SK-N-SH (cell line): ENCODE measurements at regions of chr17 and their contacts with region 1.

Region 1: DNA sequence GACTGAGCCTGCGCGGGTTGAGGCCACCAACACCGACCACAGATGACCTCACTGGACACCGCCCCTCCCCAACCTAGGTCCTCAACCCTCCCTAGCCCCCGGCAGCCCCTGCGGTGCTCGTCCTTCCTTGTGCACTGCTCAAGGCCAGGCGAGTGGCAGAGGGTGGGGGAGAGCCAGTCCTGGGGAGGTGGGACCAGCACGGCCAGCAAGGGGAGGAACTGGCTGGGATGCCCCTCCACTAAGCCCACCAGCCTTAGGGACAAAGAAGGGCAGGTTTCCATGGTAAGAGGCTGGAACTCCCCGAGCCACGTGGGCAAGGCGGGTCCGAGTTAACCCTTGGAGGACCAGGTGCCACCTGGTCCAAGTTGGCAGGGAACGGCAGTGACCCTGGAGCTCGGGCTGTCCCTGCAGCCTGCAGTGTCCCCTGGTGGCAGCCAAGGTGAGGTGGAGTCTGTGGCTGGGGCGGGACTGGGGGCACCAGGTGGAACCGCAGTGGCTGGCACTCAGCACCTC is 9.2 kb downstream of the FSCN2 start:
- DNase-seq: peak; percentile 92
- H3K4me3 ChIP-seq: no peak overlapping the region
- H3K27ac ChIP-seq: no peak overlapping the region
- H3K4me1 ChIP-seq: peaks cover 0 to 35% of the 10 kb centered on the region in 2 experiments; a peak in 1 of 4 replicates
- H3K27me3 ChIP-seq: no peaks in the 10 kb centered on the region
- CTCF ChIP-seq: peak; percentile 60
- EP300 ChIP-seq: no peak
- RAD21 ChIP-seq: peak; percentile 80

Region 2: DNA sequence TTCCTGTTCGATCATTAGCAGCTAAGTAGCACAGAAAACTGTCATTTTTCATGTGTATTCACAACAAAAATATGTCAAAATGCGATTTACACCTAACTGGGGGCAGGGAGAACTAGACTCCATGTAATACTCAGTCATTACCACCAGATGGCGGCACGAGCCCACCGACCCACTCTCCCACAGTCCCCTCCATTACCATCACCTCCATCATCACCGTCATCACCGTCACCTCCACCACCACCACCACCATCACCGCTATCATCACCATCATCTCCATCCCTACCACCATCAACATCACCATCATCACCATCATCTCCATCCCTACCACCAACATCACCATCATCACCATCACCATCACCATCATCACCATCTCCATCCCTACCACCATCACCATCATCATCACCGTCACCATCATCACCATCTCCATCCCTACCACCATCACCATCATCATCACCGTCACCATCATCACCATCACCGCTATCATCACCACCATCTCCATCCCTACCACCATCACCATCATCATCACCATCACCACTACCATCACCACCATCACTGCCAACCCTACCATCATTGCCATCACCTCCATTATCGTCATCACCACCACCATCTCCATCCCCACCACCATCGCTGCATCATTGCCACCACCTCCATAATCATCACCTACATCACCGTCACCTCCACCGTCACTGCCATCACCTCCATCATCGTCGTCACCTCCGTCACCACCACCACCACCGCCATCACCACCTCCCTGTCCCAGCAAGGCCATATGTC is 283.9 kb before region 1 on chr17:
- CTCF ChIA-PET with region 1: interaction called, 39 read pairs
- POLR2A ChIA-PET with region 1: no interaction called
- DNase-seq: peak; percentile 92
- H3K4me3 ChIP-seq: peak overlapping the region in 1 of 2 experiments; percentile 21; a peak in 1 of 4 replicates
- H3K27ac ChIP-seq: no peak overlapping the region; a peak in 1 of 4 replicates
- H3K4me1 ChIP-seq: peaks cover 0 to 38% of the 10 kb centered on the region in 2 experiments; a peak in 1 of 4 replicates
- H3K27me3 ChIP-seq: no peaks in the 10 kb centered on the region
- CTCF ChIP-seq: peak; percentile 92
- EP300 ChIP-seq: no peak
- RAD21 ChIP-seq: peak; percentile 99

Region 3: DNA sequence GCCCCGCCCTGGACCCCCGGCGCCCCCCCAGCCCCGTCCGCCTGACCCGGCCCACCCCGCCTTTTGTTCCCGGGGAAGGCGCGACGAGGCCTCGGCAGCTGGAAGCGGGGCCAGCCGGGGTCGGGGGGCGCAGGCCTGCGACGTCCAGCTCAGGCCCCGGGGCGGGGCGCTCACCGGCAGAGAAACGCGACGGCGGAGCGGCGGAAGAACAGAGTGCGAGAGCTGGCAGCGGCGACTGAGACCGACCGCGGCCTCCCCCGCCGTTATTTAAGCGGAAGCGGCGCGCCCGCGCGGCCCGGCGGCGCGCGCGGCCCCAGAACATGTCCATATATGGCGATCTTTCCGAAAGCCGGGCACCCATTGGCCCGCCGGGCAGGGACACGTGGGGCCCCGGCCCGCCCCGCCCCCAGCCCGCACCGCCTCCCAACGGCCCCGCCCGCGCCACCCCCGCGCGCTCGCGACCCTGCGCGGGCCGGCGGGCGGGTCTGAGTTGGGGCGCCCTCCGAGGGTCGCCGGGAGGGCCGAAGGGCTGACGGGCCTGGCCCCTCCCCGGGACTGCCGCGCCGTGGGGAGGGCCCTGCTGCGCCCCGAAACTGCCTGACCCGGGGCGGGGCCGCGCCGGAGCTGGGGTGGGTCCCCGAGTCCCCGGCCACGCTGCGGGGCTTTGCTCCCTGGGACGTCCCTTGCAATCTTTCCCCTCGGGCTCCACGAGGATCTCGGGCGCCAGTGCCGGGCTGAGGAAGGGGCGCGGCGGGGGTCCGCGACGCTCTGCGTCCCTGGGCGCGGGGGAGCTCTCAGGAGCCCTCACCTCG is 24.6 kb before region 1 on chr17 and contains the start of gene ACTG1:
- CTCF ChIA-PET with region 1: interaction called, 20 read pairs
- POLR2A ChIA-PET with region 1: interaction called, 5 read pairs
- DNase-seq: peak; percentile 100
- H3K4me3 ChIP-seq: peak within 1 kb of the TSS; percentile 70 to 91
- H3K27ac ChIP-seq: peak within 1 kb of the TSS; percentile 88
- H3K4me1 ChIP-seq: peaks cover 17 to 57% of the 10 kb centered on the region in 2 experiments; a peak in 3 of 4 replicates
- H3K27me3 ChIP-seq: no peaks in the 10 kb centered on the region
- CTCF ChIP-seq: no peak
- EP300 ChIP-seq: peak in 1 of 2 experiments; percentile 82; a peak in 1 of 4 replicates
- RAD21 ChIP-seq: no peak
- polyA plus RNA-seq, gene ACTG1: 3,367 and 7,871 TPM in 2 replicates

Region 4: DNA sequence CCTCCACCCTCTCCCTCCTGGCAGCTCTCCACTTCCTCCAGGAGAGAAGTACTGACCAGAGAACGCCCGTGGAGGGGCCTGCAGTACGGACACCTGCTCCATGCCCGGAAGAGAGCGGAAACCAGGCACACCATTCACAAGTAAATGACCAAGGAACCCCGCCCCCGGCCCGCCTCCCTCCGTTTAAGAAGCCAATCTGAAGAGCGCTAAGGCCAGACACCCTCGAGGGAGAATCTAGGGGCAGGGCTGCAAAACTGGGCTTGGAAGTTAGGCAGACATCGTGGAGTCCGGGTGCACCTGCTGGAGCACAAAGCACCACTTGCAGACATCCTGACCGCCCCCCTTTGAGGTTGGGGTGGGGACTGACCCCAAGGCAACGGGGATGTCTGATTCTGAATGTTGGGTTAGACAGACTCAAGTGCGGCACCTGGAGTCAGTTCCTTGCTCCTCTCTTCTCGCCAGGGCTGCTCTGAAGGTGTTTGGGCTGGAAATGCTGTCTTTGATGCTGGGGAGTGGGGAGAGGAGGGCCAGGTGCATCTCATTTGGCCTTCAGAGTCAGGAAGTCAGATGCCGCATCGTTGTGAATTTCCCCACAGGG is 15.7 kb after region 1 on chr17:
- CTCF ChIA-PET with region 1: interaction called, 24 read pairs
- POLR2A ChIA-PET with region 1: interaction called, 3 read pairs
- DNase-seq: peak; percentile 90
- H3K4me3 ChIP-seq: peak overlapping the region; percentile 78 to 89
- H3K27ac ChIP-seq: peak overlapping the region; percentile 81 to 90
- H3K4me1 ChIP-seq: peaks cover 25 to 26% of the 10 kb centered on the region in 2 experiments; a peak in 3 of 4 replicates
- H3K27me3 ChIP-seq: no peaks in the 10 kb centered on the region
- CTCF ChIP-seq: peak; percentile 17; the same call in 1 of the 2 replicates
- EP300 ChIP-seq: peak in 1 of 2 experiments; percentile 24; a peak in 1 of 4 replicates
- RAD21 ChIP-seq: peak; percentile 17

Region 5: DNA sequence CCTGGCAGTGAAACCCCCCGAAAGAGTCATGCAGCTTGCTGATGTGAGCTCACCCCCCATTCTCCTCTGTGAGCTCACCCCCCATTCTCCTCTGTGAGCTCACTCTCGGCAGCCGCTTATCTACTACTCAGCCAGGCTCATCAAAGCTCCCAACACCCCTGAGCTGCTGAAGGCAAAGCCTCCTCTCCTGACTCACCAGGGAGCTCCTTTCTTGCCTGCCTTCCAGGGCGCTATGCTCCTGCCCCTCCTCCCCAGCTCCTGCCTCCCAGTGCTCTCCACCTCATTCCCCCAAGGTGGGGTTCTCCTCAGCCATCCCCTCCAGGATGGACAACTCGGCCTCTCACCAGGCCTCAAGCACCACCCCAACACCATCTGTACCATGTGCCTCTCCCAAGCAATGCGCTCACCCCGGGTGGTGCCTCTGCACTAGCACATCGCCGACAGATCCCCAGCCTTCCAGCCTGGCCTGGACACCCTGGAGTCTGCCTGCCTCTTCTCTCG is 42.5 kb after region 1 on chr17:
- CTCF ChIA-PET with region 1: no interaction called
- POLR2A ChIA-PET with region 1: no interaction called
- DNase-seq: no peak
- H3K4me3 ChIP-seq: no peak overlapping the region
- H3K27ac ChIP-seq: peak overlapping the region in 1 of 2 experiments; percentile 17; a peak in 1 of 4 replicates
- H3K4me1 ChIP-seq: peaks cover 6 to 47% of the 10 kb centered on the region in 2 experiments; a peak in 3 of 4 replicates
- H3K27me3 ChIP-seq: no peaks in the 10 kb centered on the region
- CTCF ChIP-seq: no peak
- EP300 ChIP-seq: no peak
- RAD21 ChIP-seq: no peak

Region 6: GRCh38 chr17:81593105-81593871 is 55.9 kb after region 1 on chr17:
- CTCF ChIA-PET with region 1: no interaction called
- POLR2A ChIA-PET with region 1: no interaction called
- DNase-seq: no peak
- H3K4me3 ChIP-seq: no peak overlapping the region
- H3K27ac ChIP-seq: no peak overlapping the region
- H3K4me1 ChIP-seq: no peaks in the 10 kb centered on the region
- H3K27me3 ChIP-seq: no peaks in the 10 kb centered on the region
- CTCF ChIP-seq: no peak
- EP300 ChIP-seq: no peak
- RAD21 ChIP-seq: no peak